ENCODE measurements at regions of chr14 and their contacts with region 1.

Region 1: DNA sequence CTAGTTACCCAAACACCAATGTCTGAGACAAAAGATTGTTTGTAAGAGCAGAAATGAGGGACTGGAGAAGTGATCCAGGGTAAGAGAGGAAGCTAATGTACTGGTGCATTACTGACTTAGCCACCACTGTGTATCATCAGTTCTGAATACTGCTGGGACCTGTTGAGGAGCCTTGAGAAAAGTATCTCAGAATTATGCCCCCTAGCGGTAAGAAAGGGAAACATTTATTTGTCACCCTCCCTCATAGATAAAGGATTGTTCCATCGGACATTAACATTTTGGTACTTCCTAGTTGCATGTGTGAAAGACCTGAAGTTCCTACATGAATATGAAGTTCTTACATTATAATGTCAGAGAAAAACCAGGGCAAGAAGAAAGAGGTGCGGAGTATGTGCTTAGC is 612.5 kb downstream of the FSCB start:
- DNase-seq: no peak
- ATAC-seq: no peak
- H3K4me3 ChIP-seq: no peak overlapping the region
- H3K27ac ChIP-seq: no peak overlapping the region
- H3K4me1 ChIP-seq: peaks cover 34% of the 10 kb centered on the region
- H3K27me3 ChIP-seq: no peaks in the 10 kb centered on the region
- CTCF ChIP-seq: peak; percentile 36
- EP300 ChIP-seq: no peak
- POLR2A ChIP-seq: no peak
- RAD21 ChIP-seq: no peak

Region 2: DNA sequence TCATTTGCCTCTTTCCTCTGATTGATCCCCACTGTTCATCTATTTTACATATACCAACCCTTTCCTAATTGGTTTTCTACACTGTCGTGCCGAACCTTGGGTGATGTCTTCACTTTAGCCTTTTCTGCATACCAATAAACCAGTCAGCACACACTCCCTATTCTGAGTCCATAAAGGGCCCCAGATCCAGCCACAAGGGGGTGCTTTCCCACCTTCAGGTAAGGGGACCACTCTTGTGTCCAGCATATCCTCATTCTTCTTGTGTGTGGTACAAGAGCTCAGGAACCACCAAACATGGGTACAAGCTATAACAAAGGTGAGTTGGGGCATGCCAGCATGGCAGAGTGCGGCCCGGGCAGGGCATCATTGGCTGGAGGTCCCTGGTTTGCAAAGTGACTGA is 247.2 kb before region 1 on chr14:
- CTCF ChIA-PET with region 1: no interaction called
- POLR2A ChIA-PET with region 1: no interaction called
- in situ Hi-C with region 1: no loop called
- intact Hi-C with region 1: loop called (anchors 5 kb)
- DNase-seq: peak; percentile 23
- ATAC-seq: peak; percentile 77
- H3K4me3 ChIP-seq: no peak overlapping the region
- H3K27ac ChIP-seq: no peak overlapping the region
- H3K4me1 ChIP-seq: peaks cover 16% of the 10 kb centered on the region
- H3K27me3 ChIP-seq: no peaks in the 10 kb centered on the region
- CTCF ChIP-seq: peak; percentile 58
- EP300 ChIP-seq: no peak
- POLR2A ChIP-seq: no peak
- RAD21 ChIP-seq: no peak

Region 3: DNA sequence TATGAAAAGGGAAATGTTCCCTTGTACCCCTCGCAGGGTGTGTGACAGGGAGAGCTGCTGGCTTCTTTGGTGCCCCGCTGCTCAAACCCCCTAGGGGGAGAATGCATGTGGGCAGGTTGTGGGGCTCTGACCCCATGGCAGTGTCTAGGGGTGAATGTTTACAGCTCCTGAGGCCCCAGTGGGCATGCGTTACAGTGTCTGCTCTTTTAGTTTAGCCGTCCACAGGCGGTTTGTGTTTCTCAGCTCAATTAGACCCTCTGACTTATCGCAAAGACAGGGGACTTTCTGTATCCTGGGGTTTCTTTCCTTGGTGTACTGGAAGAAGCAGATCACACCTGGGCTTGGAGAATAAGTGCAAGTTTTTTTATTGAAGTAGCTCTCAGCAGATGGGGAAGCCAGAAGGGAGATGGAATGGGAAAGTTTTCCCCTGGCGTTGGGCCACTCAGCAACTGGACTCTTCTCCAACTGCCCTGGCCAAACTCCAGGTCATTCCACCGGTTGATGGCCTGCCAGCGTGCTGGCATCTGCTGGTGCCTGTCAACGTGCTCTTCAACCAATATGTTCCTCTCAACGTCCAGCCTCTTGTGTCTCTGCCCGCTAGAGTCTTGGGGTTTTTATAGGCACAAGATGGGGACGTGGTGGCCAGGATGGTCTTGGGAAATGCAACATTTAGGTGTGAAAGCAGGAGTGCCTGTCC is 108.3 kb before region 1 on chr14:
- CTCF ChIA-PET with region 1: no interaction called
- POLR2A ChIA-PET with region 1: no interaction called
- in situ Hi-C with region 1: loop called (anchors 10 kb)
- intact Hi-C with region 1: no loop called
- DNase-seq: no peak
- ATAC-seq: no peak
- H3K4me3 ChIP-seq: no peak overlapping the region
- H3K27ac ChIP-seq: no peak overlapping the region
- H3K4me1 ChIP-seq: peaks cover 16% of the 10 kb centered on the region
- H3K27me3 ChIP-seq: no peaks in the 10 kb centered on the region
- CTCF ChIP-seq: no peak
- EP300 ChIP-seq: no peak
- POLR2A ChIP-seq: no peak
- RAD21 ChIP-seq: no peak

Region 4: DNA sequence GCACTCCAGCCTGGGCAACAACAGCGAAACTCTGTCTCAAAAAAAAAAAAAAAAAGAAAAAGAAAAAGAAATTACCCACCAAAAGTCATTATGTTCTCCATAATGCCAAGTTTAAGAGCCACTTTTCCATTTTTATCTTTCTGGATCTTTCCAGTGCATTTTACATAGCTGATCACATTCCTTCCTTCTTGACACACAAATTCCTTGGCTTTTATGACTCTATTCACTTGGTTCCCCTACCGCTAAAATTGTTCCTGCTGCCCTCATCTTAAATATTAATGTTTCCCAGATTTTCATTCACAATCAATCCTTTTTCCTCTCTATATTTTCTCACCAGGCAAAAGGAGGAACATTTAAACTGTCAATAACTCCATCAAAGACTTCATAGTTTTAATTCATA is 1047.1 kb after region 1 on chr14:
- CTCF ChIA-PET with region 1: no interaction called
- POLR2A ChIA-PET with region 1: no interaction called
- in situ Hi-C with region 1: no loop called
- intact Hi-C with region 1: no loop called
- DNase-seq: no peak
- ATAC-seq: no peak
- H3K4me3 ChIP-seq: no peak overlapping the region
- H3K27ac ChIP-seq: no peak overlapping the region
- H3K4me1 ChIP-seq: no peaks in the 10 kb centered on the region
- H3K27me3 ChIP-seq: no peaks in the 10 kb centered on the region
- CTCF ChIP-seq: no peak
- EP300 ChIP-seq: no peak
- POLR2A ChIP-seq: no peak
- RAD21 ChIP-seq: no peak